MCF 10A (cell line): ENCODE measurements at regions of chr5 and their contacts with region 1.

Region 1: DNA sequence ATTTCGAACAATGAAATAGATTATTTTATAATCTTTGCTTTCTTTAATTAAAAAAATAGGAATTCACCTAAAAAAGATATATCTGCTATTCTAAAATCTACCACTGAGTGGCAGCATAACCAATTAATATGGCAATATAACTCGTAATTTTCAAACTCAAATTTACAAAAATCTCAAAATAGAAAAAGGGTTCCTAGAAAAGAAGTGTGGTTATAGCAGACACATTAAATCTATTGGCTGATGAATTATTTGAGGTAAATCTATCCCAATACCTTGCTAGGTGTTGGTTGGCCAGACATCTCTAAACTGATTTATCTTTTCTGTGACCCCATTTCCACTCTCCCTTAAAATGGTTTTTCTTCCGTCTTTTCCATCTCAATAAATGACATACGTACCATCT is 30.2 kb upstream of the NRG2 start:
- DNase-seq: peak; percentile 33
- H3K4me3 Mint-ChIP-seq: no peak overlapping the region
- H3K27ac Mint-ChIP-seq: no peak overlapping the region
- H3K4me1 Mint-ChIP-seq: no peaks in the 10 kb centered on the region
- H3K27me3 Mint-ChIP-seq: peaks cover 15% of the 10 kb centered on the region
- CTCF ChIP-seq: peak; percentile 64

Region 2: DNA sequence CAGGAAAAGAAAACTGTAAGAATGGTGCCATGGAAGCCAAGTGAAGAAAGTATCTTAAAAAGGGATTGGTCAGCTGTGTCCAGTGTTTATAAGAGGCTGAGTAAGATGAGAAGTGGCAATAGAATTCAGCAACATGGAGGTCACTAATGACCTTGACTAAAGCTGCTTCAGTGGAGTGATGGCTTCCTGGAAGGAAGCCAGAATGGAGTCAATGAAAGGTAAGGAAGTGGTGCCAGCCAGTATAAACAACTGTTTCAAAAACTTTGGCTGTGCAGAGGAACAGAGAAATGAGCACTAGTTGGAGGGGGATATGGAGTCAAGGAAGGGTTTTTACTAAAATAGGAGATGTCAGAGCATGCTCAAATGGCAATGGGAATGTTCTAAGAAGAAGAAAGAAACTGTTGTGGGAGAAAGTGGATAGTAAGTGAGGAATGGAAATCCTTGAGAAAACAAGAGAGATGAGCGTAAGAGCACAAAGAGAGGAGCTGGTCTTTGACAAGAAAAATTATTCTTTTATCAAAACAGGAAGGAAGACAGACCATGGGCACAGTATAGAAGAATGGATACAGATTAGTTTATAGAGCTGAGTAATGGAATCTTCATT is 19.1 kb before region 1 on chr5:
- CTCF ChIA-PET with region 1: interaction called, 10 read pairs
- POLR2A ChIA-PET with region 1: no interaction called
- intact Hi-C with region 1: no loop called
- DNase-seq: peak; percentile 77
- H3K4me3 Mint-ChIP-seq: no peak overlapping the region
- H3K27ac Mint-ChIP-seq: no peak overlapping the region
- H3K4me1 Mint-ChIP-seq: no peaks in the 10 kb centered on the region
- H3K27me3 Mint-ChIP-seq: no peaks in the 10 kb centered on the region
- CTCF ChIP-seq: no peak

Region 3: GRCh38 chr5:140107312-140108083 is 34.2 kb after region 1 on chr5:
- CTCF ChIA-PET with region 1: interaction called, 17 read pairs
- POLR2A ChIA-PET with region 1: interaction called, 7 read pairs
- intact Hi-C with region 1: loop called (anchors 2 kb)
- DNase-seq: peak; percentile 95
- H3K4me3 Mint-ChIP-seq: peak overlapping the region; percentile 97
- H3K27ac Mint-ChIP-seq: peak overlapping the region; percentile 98
- H3K4me1 Mint-ChIP-seq: peaks cover 45% of the 10 kb centered on the region
- H3K27me3 Mint-ChIP-seq: no peaks in the 10 kb centered on the region
- CTCF ChIP-seq: no peak

Region 4: GRCh38 chr5:140145818-140146522 is 72.7 kb after region 1 on chr5:
- CTCF ChIA-PET with region 1: interaction called, 109 read pairs
- POLR2A ChIA-PET with region 1: interaction called, 4 read pairs
- intact Hi-C with region 1: loop called (anchors 1 kb)
- DNase-seq: peak; percentile 39
- H3K4me3 Mint-ChIP-seq: no peak overlapping the region
- H3K27ac Mint-ChIP-seq: no peak overlapping the region
- H3K4me1 Mint-ChIP-seq: peaks cover 11% of the 10 kb centered on the region
- H3K27me3 Mint-ChIP-seq: no peaks in the 10 kb centered on the region
- CTCF ChIP-seq: peak; percentile 44

Region 5: GRCh38 chr5:140157032-140157803 is 83.9 kb after region 1 on chr5:
- CTCF ChIA-PET with region 1: interaction called, 215 read pairs
- POLR2A ChIA-PET with region 1: interaction called, 8 read pairs
- intact Hi-C with region 1: loop called (anchors 1 kb)
- DNase-seq: peak; percentile 93
- H3K4me3 Mint-ChIP-seq: peak overlapping the region; percentile 62
- H3K27ac Mint-ChIP-seq: peak overlapping the region; percentile 9
- H3K4me1 Mint-ChIP-seq: peaks cover 9% of the 10 kb centered on the region
- H3K27me3 Mint-ChIP-seq: no peaks in the 10 kb centered on the region
- CTCF ChIP-seq: peak; percentile 97

Region 6: DNA sequence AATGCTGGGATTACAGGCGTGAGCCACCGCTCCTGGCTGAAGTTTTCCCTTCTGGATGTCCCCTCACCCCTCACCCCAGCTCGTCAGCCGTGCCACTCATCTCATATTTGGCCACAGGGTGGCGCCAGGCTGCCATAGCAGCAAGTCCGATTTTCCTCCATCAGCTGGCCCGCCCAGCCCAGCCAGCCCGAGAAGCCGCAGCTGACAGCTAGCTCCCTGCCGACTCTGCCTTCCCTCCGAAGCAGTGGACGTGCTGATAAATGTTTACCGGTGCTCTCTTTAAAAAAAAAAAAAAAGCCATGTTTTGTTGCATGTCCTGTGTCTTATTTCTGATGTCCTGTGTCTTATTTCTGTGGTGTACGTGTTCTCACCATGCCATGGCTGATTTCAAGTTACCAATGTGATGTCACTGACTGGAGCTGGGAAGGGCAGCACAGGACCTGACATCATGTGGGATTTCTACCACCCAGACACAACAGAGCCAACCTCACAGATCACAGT is 171.3 kb after region 1 on chr5:
- CTCF ChIA-PET with region 1: interaction called, 3 read pairs
- POLR2A ChIA-PET with region 1: no interaction called
- intact Hi-C with region 1: loop called (anchors 5 kb)
- DNase-seq: peak; percentile 91
- H3K4me3 Mint-ChIP-seq: no peak overlapping the region
- H3K27ac Mint-ChIP-seq: no peak overlapping the region
- H3K4me1 Mint-ChIP-seq: peaks cover 36% of the 10 kb centered on the region
- H3K27me3 Mint-ChIP-seq: no peaks in the 10 kb centered on the region
- CTCF ChIP-seq: peak; percentile 94